Left colon (tissue), 2 donors: ENCODE measurements at regions of chr6 and their contacts with region 1.

Region 1: GRCh38 chr6:131532580-131533039 is 40.4 kb upstream of the ARG1 start:
- DNase-seq: no peak
- ATAC-seq: no peak

Region 2: GRCh38 chr6:131199568-131200272 is 332.9 kb before region 1 on chr6:
- intact Hi-C with region 1: loop called (anchors 10 kb)
- DNase-seq: peak; percentile 32 to 51
- ATAC-seq: peak; percentile 100

Region 3: DNA sequence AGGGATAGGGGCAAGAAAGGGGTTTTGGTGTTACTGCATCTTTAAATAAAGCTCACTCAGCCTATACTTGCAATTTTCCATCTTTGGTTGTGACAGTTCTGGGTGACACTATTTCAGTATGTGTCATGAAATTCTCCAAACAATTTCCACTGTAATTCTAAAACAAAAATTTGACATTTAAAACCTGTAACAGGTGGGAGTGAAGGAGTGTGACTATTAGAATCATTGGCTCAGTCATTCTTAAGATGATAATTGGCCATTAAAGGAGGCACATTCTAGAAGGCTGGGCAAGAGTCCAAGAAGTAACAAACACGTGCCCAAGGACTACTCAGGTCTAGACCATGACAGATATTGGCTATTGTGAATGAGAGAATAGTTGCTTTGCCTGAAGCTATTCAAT is 112.9 kb before region 1 on chr6:
- intact Hi-C with region 1: no loop called
- DNase-seq: no peak
- ATAC-seq: no peak